Activated naive CD4-positive, alpha-beta T cell treated with anti-CD3 and anti-CD28 coated beads for 36 hours (primary cell): ENCODE measurements at regions of chr10 and their contacts with region 1.

Region 1: GRCh38 chr10:84328418-84329195 is at the start of gene CCSER2:
- DNase-seq: peak; percentile 97
- H3K4me3 Mint-ChIP-seq: peak within 1 kb of the TSS; percentile 95
- H3K27ac Mint-ChIP-seq: peak within 1 kb of the TSS; percentile 96
- H3K4me1 Mint-ChIP-seq: peaks cover 26% of the 10 kb centered on the region
- H3K27me3 Mint-ChIP-seq: no peaks in the 10 kb centered on the region
- total RNA-seq, gene CCSER2: 78.0 to 81.8 TPM

Region 2: GRCh38 chr10:84139126-84140035 is 189.2 kb before region 1 on chr10 and contains the start of gene GHITM:
- CTCF ChIA-PET with region 1: no interaction called
- intact Hi-C with region 1: loop called (anchors 1 kb)
- DNase-seq: peak; percentile 100
- H3K4me3 Mint-ChIP-seq: peak within 1 kb of the TSS; percentile 95
- H3K27ac Mint-ChIP-seq: peak within 1 kb of the TSS; percentile 99
- H3K4me1 Mint-ChIP-seq: peaks cover 36% of the 10 kb centered on the region
- H3K27me3 Mint-ChIP-seq: no peaks in the 10 kb centered on the region
- total RNA-seq, gene GHITM: 281 TPM

Region 3: GRCh38 chr10:84294766-84295447 is 33.7 kb before region 1 on chr10:
- CTCF ChIA-PET with region 1: no interaction called
- intact Hi-C with region 1: loop called (anchors 1 kb)
- DNase-seq: peak; percentile 27
- H3K4me3 Mint-ChIP-seq: no peak overlapping the region
- H3K27ac Mint-ChIP-seq: no peak overlapping the region
- H3K4me1 Mint-ChIP-seq: peaks cover 21% of the 10 kb centered on the region
- H3K27me3 Mint-ChIP-seq: peaks cover 3% of the 10 kb centered on the region

Region 4: GRCh38 chr10:84308481-84309304 is 19.9 kb before region 1 on chr10:
- CTCF ChIA-PET with region 1: interaction called, 7 read pairs
- intact Hi-C with region 1: loop called (anchors 1 kb)
- DNase-seq: peak; percentile 85
- H3K4me3 Mint-ChIP-seq: peak overlapping the region; percentile 42
- H3K27ac Mint-ChIP-seq: peak overlapping the region; percentile 93
- H3K4me1 Mint-ChIP-seq: peaks cover 45% of the 10 kb centered on the region
- H3K27me3 Mint-ChIP-seq: peaks cover 1% of the 10 kb centered on the region

Region 5: GRCh38 chr10:84317174-84317573 is 11.4 kb before region 1 on chr10:
- CTCF ChIA-PET with region 1: no interaction called
- intact Hi-C with region 1: loop called (anchors 1 kb)
- DNase-seq: no peak
- H3K4me3 Mint-ChIP-seq: no peak overlapping the region
- H3K27ac Mint-ChIP-seq: no peak overlapping the region
- H3K4me1 Mint-ChIP-seq: peaks cover 21% of the 10 kb centered on the region
- H3K27me3 Mint-ChIP-seq: no peaks in the 10 kb centered on the region

Region 6: GRCh38 chr10:84341538-84341856 is 12.9 kb after region 1 on chr10:
- CTCF ChIA-PET with region 1: interaction called, 5 read pairs
- intact Hi-C with region 1: loop called (anchors 1 kb)
- DNase-seq: peak; percentile 67
- H3K4me3 Mint-ChIP-seq: peak overlapping the region; percentile 59
- H3K27ac Mint-ChIP-seq: peak overlapping the region; percentile 77
- H3K4me1 Mint-ChIP-seq: peaks cover 51% of the 10 kb centered on the region
- H3K27me3 Mint-ChIP-seq: no peaks in the 10 kb centered on the region

Region 7: DNA sequence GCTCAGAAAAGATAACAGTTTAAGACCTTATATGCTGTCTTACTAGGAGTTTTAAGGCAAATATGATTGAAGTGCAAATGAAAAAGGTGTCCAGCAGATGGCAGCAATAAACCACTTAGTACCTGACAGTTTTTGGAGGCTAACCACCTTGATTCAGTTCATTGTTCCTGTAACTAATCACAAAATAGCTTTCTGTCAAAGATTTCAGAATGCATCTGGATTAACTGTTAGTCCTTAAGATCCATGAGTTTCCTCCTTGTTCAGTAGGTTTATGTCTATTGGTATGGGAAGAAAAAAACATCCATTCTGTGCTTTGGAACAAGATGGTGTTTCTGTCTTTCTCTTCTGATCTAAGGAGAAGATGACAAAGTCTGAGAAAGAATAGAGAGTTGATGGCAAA is 46.4 kb after region 1 on chr10:
- CTCF ChIA-PET with region 1: interaction called, 4 read pairs
- intact Hi-C with region 1: loop called (anchors 1 kb)
- DNase-seq: peak; percentile 70
- H3K4me3 Mint-ChIP-seq: no peak overlapping the region
- H3K27ac Mint-ChIP-seq: peak overlapping the region; percentile 30
- H3K4me1 Mint-ChIP-seq: peaks cover 45% of the 10 kb centered on the region
- H3K27me3 Mint-ChIP-seq: no peaks in the 10 kb centered on the region

Region 8: GRCh38 chr10:85124603-85125051 is 796.0 kb after region 1 on chr10:
- CTCF ChIA-PET with region 1: no interaction called
- intact Hi-C with region 1: no loop called
- DNase-seq: no peak
- H3K4me3 Mint-ChIP-seq: no peak overlapping the region
- H3K27ac Mint-ChIP-seq: no peak overlapping the region
- H3K4me1 Mint-ChIP-seq: no peaks in the 10 kb centered on the region
- H3K27me3 Mint-ChIP-seq: peaks cover 3% of the 10 kb centered on the region